Astrocyte of the cerebellum (primary cell): ENCODE measurements at regions of chr11 and their contacts with region 1.

Region 1: GRCh38 chr11:96134602-96135001 is 208.4 kb downstream of the MAML2 start:
- DNase-seq: no peak
- H3K4me3 ChIP-seq: no peak overlapping the region
- CTCF ChIP-seq: no peak

Region 2: GRCh38 chr11:96084610-96085318 is 49.8 kb before region 1 on chr11:
- in situ Hi-C with region 1: loop called (anchors 5 kb)
- DNase-seq: no peak
- H3K4me3 ChIP-seq: no peak overlapping the region
- CTCF ChIP-seq: no peak